Activated CD4-positive, alpha-beta T cell treated with anti-CD3 and anti-CD28 coated beads, Interleukin-2, amount 10 ng/mL, durations not matched to agents 7 days and 5 days (primary cell): ENCODE measurements at regions of chr1 and their contacts with region 1.

Region 1: DNA sequence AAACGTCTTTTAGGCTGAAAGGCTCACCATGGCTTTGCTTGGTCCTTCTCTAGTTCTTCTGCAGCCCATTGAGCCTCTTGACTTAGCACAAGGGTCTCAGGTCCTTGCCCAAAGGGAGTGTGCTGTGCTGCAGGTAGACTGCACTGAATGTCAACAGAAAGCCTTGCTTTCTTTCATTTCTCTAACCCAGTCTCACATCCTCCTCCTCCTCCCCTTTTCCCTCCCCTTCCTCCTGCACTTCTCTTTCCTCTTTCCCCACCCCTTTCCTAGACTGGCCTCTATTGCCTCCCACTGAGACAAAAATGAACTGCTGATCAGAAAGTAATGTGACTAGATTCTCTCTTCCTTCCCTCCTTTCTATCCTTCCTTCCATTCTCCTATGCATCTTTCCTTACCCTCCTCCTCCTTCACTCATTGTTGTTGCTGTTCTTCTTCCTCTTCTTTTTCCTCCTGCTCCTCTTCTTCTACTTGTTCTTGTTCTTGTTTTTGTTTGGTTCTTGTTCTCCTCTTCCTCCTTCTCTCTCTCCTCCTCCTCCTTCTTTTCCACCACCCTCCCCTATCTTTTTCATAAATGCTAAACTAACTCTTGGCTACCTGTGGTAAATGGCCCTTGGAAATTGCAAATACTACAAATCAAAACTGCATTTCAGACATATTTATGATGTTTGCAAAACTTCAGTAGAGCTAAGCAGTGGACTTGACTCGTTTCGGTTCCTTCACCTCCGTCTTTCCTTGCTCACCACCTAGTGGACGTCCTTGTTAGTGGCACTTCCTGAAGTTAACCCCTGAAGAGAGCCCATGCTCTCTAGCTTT is at the start of gene SELL:
- DNase-seq: peak; percentile 88
- H3K4me3 Mint-ChIP-seq: peak within 1 kb of the TSS; percentile 94
- H3K27ac Mint-ChIP-seq: peak within 1 kb of the TSS; percentile 95
- H3K4me1 Mint-ChIP-seq: peaks cover 20% of the 10 kb centered on the region
- H3K27me3 Mint-ChIP-seq: peaks cover 19% of the 10 kb centered on the region
- total RNA-seq, gene SELL: 568 to 595 TPM

Region 2: GRCh38 chr1:169577981-169578738 is 133.5 kb before region 1 on chr1:
- CTCF ChIA-PET with region 1: interaction called, 11 read pairs
- POLR2A ChIA-PET with region 1: interaction called, 3 read pairs
- DNase-seq: no peak
- H3K4me3 Mint-ChIP-seq: no peak overlapping the region
- H3K27ac Mint-ChIP-seq: no peak overlapping the region
- H3K4me1 Mint-ChIP-seq: peaks cover 6% of the 10 kb centered on the region
- H3K27me3 Mint-ChIP-seq: no peaks in the 10 kb centered on the region

Region 3: DNA sequence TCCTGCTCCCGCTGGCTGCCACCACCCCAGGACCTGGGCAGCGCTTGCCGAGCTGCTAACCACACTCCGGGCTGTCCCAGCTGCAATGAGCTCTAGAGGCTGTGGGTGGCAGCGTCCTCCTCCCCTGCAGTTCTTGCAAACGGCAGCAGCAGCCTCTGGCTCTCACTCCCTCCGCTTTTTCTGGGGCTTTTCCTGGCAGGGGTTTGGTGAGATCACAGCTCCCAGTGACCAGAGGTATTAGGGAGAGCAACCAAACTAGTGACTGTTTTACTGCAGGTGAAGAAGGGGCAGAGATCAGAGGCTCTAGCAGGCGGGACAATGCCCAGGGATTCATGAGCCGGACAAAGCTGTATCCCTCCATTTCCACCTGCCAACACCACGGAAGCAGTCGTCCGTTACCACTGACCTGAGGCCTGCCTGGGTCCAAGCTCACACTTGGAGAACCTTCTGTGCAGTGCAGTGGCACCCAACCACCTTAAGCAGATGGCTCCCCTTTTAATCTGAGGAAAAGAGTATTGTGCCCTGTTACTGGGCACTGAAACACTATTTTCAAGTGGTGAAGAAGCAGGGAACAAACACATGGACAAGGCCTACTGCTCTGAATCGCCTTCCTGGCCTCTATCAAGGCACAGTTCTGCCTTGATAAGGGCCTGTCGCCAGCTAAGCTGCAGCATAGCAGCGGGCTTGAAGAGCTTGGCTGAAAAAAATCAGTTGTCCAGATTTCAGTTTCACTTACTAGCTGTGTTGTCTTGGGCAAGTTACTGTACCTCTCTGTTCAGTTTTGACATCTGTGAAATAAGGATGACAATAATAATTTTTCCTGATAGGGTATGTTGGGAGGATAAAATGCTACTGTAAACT is 125.0 kb before region 1 on chr1 and contains the start of gene F5:
- CTCF ChIA-PET with region 1: interaction called, 24 read pairs
- POLR2A ChIA-PET with region 1: no interaction called
- DNase-seq: peak; percentile 86
- H3K4me3 Mint-ChIP-seq: peak within 1 kb of the TSS; percentile 89
- H3K27ac Mint-ChIP-seq: peak within 1 kb of the TSS; percentile 92
- H3K4me1 Mint-ChIP-seq: peaks cover 70% of the 10 kb centered on the region
- H3K27me3 Mint-ChIP-seq: no peaks in the 10 kb centered on the region
- total RNA-seq, gene F5: 12.2 to 15.7 TPM

Region 4: GRCh38 chr1:169595764-169596711 is 115.6 kb before region 1 on chr1:
- CTCF ChIA-PET with region 1: interaction called, 11 read pairs
- POLR2A ChIA-PET with region 1: interaction called, 3 read pairs
- DNase-seq: peak; percentile 48
- H3K4me3 Mint-ChIP-seq: no peak overlapping the region
- H3K27ac Mint-ChIP-seq: no peak overlapping the region
- H3K4me1 Mint-ChIP-seq: peaks cover 43% of the 10 kb centered on the region
- H3K27me3 Mint-ChIP-seq: peaks cover 5% of the 10 kb centered on the region

Region 5: GRCh38 chr1:169601093-169601881 is 110.4 kb before region 1 on chr1:
- CTCF ChIA-PET with region 1: interaction called, 28 read pairs
- POLR2A ChIA-PET with region 1: interaction called, 4 read pairs
- DNase-seq: peak; percentile 12
- H3K4me3 Mint-ChIP-seq: no peak overlapping the region
- H3K27ac Mint-ChIP-seq: peak overlapping the region; percentile 20
- H3K4me1 Mint-ChIP-seq: peaks cover 58% of the 10 kb centered on the region
- H3K27me3 Mint-ChIP-seq: peaks cover 5% of the 10 kb centered on the region

Region 6: DNA sequence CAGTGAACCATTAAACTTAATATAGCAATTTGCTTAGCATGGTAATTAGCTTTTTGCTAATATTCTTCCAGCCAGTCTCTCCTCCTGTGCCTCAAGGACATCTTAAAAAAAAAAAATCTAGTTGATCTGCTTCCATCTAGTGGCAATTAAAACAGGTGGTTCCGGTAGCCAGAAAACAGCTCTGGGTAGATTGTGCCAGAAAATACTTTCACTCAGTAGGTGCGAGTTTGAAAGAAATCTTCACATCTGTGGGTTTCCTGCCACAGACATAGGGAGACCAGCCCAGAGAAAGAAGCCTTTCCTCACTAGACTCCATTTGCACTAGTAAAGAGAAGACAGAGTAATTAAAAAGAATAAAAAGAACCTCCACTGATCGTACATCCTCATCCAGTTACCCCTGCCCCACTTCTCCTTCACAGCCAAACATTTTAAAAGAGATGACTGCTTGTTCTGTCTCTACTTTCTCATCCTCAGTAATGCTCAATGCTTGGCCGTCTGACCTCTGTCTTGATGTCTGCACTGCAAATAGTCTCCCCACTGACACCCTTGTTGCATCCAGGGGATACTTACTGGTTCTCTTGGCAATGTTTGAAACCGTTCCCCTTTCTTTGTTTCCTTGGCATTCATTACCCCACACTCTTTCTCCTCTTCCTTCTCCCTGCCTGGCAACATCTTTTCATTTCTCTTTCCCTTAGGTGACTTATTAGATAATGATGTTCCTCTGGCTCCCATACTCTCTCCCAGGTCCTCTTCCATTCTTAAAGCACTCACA is 17.2 kb before region 1 on chr1:
- CTCF ChIA-PET with region 1: interaction called, 27 read pairs
- POLR2A ChIA-PET with region 1: interaction called, 10 read pairs
- DNase-seq: peak; percentile 79
- H3K4me3 Mint-ChIP-seq: peak overlapping the region; percentile 49
- H3K27ac Mint-ChIP-seq: peak overlapping the region; percentile 91
- H3K4me1 Mint-ChIP-seq: peaks cover 96% of the 10 kb centered on the region
- H3K27me3 Mint-ChIP-seq: no peaks in the 10 kb centered on the region

Region 7: GRCh38 chr1:169765580-169766331 is 54.1 kb after region 1 on chr1:
- CTCF ChIA-PET with region 1: no interaction called
- POLR2A ChIA-PET with region 1: no interaction called
- DNase-seq: no peak
- H3K4me3 Mint-ChIP-seq: no peak overlapping the region
- H3K27ac Mint-ChIP-seq: no peak overlapping the region
- H3K4me1 Mint-ChIP-seq: no peaks in the 10 kb centered on the region
- H3K27me3 Mint-ChIP-seq: peaks cover 5% of the 10 kb centered on the region

Region 8: DNA sequence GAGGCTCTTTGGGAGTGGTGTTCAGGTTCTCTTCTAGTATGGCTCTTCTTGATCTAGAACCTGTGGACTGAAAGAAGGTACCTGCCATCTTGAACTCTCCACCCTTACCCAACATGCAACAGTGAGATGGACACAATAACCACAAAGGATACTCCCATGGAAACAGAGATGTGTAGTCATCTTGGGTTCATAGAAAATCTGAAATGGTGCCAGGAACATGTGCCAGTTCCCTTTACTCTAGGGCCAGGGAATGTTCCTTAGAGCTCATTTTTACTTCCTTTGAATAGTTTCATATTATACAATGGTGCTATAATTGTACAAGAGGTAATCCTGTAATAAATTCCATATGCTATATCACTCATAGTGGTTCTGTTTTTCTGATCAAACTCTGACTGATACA is 195.3 kb after region 1 on chr1:
- CTCF ChIA-PET with region 1: no interaction called
- POLR2A ChIA-PET with region 1: no interaction called
- DNase-seq: no peak
- H3K4me3 Mint-ChIP-seq: no peak overlapping the region
- H3K27ac Mint-ChIP-seq: no peak overlapping the region
- H3K4me1 Mint-ChIP-seq: peaks cover 32% of the 10 kb centered on the region
- H3K27me3 Mint-ChIP-seq: peaks cover 2% of the 10 kb centered on the region